Activated CD4-positive, alpha-beta memory T cell treated with anti-CD3 and anti-CD28 coated beads for 36 hours (primary cell): ENCODE measurements at regions of chr7 and their contacts with region 1.

Region 1: GRCh38 chr7:38660427-38661099 is 29.4 kb upstream of the AMPH start:
- DNase-seq: peak; percentile 34
- H3K4me3 Mint-ChIP-seq: no peak overlapping the region
- H3K27ac Mint-ChIP-seq: no peak overlapping the region
- H3K4me1 Mint-ChIP-seq: no peaks in the 10 kb centered on the region
- H3K27me3 Mint-ChIP-seq: peaks cover 10% of the 10 kb centered on the region

Region 2: DNA sequence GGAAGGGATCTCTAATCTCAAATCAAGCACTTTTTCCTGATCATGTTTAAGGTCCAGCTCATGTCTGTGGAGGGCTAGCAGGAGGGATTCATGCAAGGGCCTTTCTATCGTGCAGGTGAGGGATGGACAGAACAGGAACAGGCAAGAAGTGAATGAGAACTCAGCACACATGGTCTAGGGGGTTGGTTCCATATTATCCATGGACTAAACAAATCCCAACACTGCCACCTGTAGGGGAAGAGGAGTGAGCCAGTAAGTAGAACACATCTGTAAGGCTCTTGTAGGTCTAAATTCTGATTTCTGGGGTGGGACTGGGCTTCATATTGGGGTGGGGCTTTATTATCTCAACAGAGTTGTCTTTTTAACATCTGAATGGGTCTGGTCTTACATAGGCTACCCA is 249.2 kb before region 1 on chr7:
- CTCF ChIA-PET with region 1: interaction called, 4 read pairs
- POLR2A ChIA-PET with region 1: no interaction called
- intact Hi-C with region 1: loop called (anchors 5 kb)
- DNase-seq: no peak
- H3K4me3 Mint-ChIP-seq: no peak overlapping the region
- H3K27ac Mint-ChIP-seq: no peak overlapping the region
- H3K4me1 Mint-ChIP-seq: peaks cover 14% of the 10 kb centered on the region
- H3K27me3 Mint-ChIP-seq: peaks cover 5% of the 10 kb centered on the region